ENCODE measurements at regions of chr4 and their contacts with region 1.

Region 1: DNA sequence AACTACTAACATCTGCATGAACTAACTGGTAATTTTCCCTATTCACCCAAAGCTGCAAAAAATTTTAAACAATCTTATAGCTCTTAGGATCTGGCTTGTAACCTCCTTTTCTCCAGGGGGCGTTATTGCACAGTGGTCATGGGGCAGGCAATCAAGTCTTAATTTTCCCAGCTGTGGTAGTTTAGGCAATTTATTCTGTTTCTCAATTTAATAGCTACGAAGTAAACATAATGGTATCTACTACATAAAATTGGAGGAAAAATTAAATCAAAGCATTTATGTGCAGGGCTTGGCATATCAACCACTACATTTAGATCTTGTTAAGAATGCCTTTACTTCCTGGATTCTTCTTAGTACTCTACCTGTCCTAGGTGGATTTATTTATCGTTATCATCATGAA is 137.4 kb upstream of the GUCY1A1 start:
- DNase-seq: no peak
- H3K4me3 ChIP-seq: no peak overlapping the region
- H3K27ac ChIP-seq: peak overlapping the region in 2 of 4 donors; percentile 3 to 26
- H3K4me1 ChIP-seq: peaks cover 0 to 79% (median 43%) of the 10 kb centered on the region in 4 donors
- H3K27me3 ChIP-seq: no peaks in the 10 kb centered on the region
- CTCF ChIP-seq: no peak
- EP300 ChIP-seq: no peak
- POLR2A ChIP-seq: no peak

Region 2: GRCh38 chr4:155319506-155319905 is 209.8 kb before region 1 on chr4:
- intact Hi-C with region 1: no loop called
- DNase-seq: no peak
- H3K4me3 ChIP-seq: no peak overlapping the region
- H3K27ac ChIP-seq: no peak overlapping the region
- H3K4me1 ChIP-seq: no peaks in the 10 kb centered on the region
- H3K27me3 ChIP-seq: no peaks in the 10 kb centered on the region
- CTCF ChIP-seq: no peak
- EP300 ChIP-seq: no peak
- POLR2A ChIP-seq: no peak

Region 3: GRCh38 chr4:155339588-155339987 is 189.7 kb before region 1 on chr4:
- intact Hi-C with region 1: no loop called
- DNase-seq: no peak
- H3K4me3 ChIP-seq: no peak overlapping the region
- H3K27ac ChIP-seq: no peak overlapping the region
- H3K4me1 ChIP-seq: no peaks in the 10 kb centered on the region
- H3K27me3 ChIP-seq: no peaks in the 10 kb centered on the region
- CTCF ChIP-seq: no peak
- EP300 ChIP-seq: no peak
- POLR2A ChIP-seq: no peak

Region 4: GRCh38 chr4:155582971-155583437 is 53.7 kb after region 1 on chr4:
- intact Hi-C with region 1: no loop called
- DNase-seq: no peak
- H3K4me3 ChIP-seq: no peak overlapping the region
- H3K27ac ChIP-seq: peak overlapping the region in 1 of 4 donors; percentile 1
- H3K4me1 ChIP-seq: peaks cover 0 to 13% (median 6%) of the 10 kb centered on the region in 4 donors
- H3K27me3 ChIP-seq: no peaks in the 10 kb centered on the region
- CTCF ChIP-seq: no peak
- EP300 ChIP-seq: no peak
- POLR2A ChIP-seq: no peak

Region 5: GRCh38 chr4:155667568-155668511 is 138.6 kb after region 1 on chr4:
- intact Hi-C with region 1: loop called (anchors 2 kb)
- DNase-seq: peak; percentile 88
- H3K4me3 ChIP-seq: peak overlapping the region; percentile 75 to 82 (median 80)
- H3K27ac ChIP-seq: peak overlapping the region; percentile 90 to 97 (median 94)
- H3K4me1 ChIP-seq: peaks cover 0 to 44% (median 24%) of the 10 kb centered on the region in 4 donors
- H3K27me3 ChIP-seq: no peaks in the 10 kb centered on the region
- CTCF ChIP-seq: no peak
- EP300 ChIP-seq: no peak
- POLR2A ChIP-seq: peak in 1 of 2 donors; percentile 50

Region 6: GRCh38 chr4:155693015-155693663 is 163.9 kb after region 1 on chr4:
- intact Hi-C with region 1: loop called (anchors 10 kb)
- DNase-seq: no peak
- H3K4me3 ChIP-seq: no peak overlapping the region
- H3K27ac ChIP-seq: peak overlapping the region; percentile 41 to 76 (median 64)
- H3K4me1 ChIP-seq: peaks cover 0 to 89% (median 45%) of the 10 kb centered on the region in 4 donors
- H3K27me3 ChIP-seq: no peaks in the 10 kb centered on the region
- CTCF ChIP-seq: no peak
- EP300 ChIP-seq: peak in 1 of 4 donors; percentile 39
- POLR2A ChIP-seq: no peak

Region 7: GRCh38 chr4:155777971-155778735 is 248.9 kb after region 1 on chr4:
- intact Hi-C with region 1: loop called (anchors 10 kb)
- DNase-seq: no peak
- H3K4me3 ChIP-seq: no peak overlapping the region
- H3K27ac ChIP-seq: peak overlapping the region; percentile 53 to 77 (median 70)
- H3K4me1 ChIP-seq: peaks cover 0 to 57% (median 50%) of the 10 kb centered on the region in 4 donors
- H3K27me3 ChIP-seq: no peaks in the 10 kb centered on the region
- CTCF ChIP-seq: no peak
- EP300 ChIP-seq: peak in 3 of 4 donors; percentile 19 to 40 (median 38)
- POLR2A ChIP-seq: no peak

Region 8: GRCh38 chr4:156870131-156870530 is 1340.9 kb after region 1 on chr4:
- intact Hi-C with region 1: no loop called
- DNase-seq: no peak
- H3K4me3 ChIP-seq: no peak overlapping the region
- H3K27ac ChIP-seq: no peak overlapping the region
- H3K4me1 ChIP-seq: peaks cover 0 to 12% (median 6%) of the 10 kb centered on the region in 4 donors
- H3K27me3 ChIP-seq: no peaks in the 10 kb centered on the region
- CTCF ChIP-seq: no peak
- EP300 ChIP-seq: no peak
- POLR2A ChIP-seq: no peak